ENCODE measurements at regions of chr1 and their contacts with region 1.

Region 1: GRCh38 chr1:163321311-163322305 is at the start of gene NUF2:
- DNase-seq: peak; percentile 85 to 97 (median 96)
- ATAC-seq: peak; percentile 99
- H3K4me3 ChIP-seq: peak within 1 kb of the TSS; percentile 69
- H3K4me3 Mint-ChIP-seq: peak within 1 kb of the TSS; percentile 92 to 96 (median 94)
- H3K27ac ChIP-seq: peak within 1 kb of the TSS; percentile 68
- H3K27ac Mint-ChIP-seq: peak within 1 kb of the TSS; percentile 92 to 98 (median 96)
- H3K4me1 ChIP-seq: peaks cover 12 to 15% of the 10 kb centered on the region in 2 donors
- H3K4me1 Mint-ChIP-seq: peaks cover 12 to 45% (median 24%) of the 10 kb centered on the region in 7 donors
- H3K27me3 ChIP-seq: no peaks in the 10 kb centered on the region
- H3K27me3 Mint-ChIP-seq: no peaks in the 10 kb centered on the region
- total RNA-seq, gene NUF2: 1.0 to 38.8 (median 2.1) TPM

Region 2: DNA sequence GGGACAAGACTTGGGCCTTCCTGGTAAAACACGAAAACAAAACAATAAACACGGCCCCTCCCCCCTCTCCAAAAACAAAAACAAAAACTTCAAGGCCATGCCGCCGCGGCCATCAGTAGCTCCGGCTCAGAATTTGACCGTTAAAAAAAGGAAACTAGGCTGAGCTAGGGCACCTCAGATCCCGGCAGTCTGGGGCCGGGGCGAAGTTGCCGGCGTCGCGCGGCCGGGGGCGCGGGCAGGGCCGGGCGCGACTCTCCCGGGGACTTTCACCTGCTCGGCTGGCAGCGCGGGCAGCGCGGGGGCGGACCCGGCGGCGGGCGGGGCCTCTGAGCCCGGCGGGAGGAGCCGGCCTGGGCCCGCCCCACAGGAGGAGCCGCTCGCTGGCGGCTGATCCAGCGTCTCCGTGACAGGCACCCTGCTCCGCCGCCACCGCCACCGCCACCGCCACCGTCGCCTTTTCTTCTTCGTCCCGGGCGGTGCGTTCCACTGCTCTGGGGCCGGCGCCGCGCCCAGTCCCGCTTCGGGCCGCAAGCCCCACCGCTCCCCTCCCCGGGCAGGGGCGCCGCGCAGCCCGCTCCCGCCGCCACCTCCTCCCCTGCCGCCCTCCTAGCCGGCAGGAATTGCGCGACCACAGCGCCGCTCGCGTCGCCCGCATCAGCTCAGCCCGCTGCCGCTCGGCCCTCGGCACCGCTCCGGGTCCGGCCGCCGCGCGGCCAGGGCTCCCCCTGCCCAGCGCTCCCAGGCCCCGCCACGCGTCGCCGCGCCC is 1252.1 kb before region 1 on chr1 and contains the start of gene NOS1AP:
- CTCF ChIA-PET with region 1: no interaction called
- POLR2A ChIA-PET with region 1: no interaction called
- intact Hi-C with region 1: loop called in 1 of 2 experiments (anchors 2 kb)
- DNase-seq: peak; percentile 50 to 87 (median 71)
- ATAC-seq: peak; percentile 99
- H3K4me3 ChIP-seq: peak within 1 kb of the TSS; percentile 56
- H3K4me3 Mint-ChIP-seq: peak within 1 kb of the TSS; percentile 79 to 90 (median 84)
- H3K27ac ChIP-seq: no peak within 1 kb of the TSS
- H3K27ac Mint-ChIP-seq: peak within 1 kb of the TSS in 1 of 9 donors; percentile 31
- H3K4me1 ChIP-seq: peaks cover 0 to 5% of the 10 kb centered on the region in 2 donors
- H3K4me1 Mint-ChIP-seq: peaks cover 0 to 12% (median 5%) of the 10 kb centered on the region in 7 donors
- H3K27me3 ChIP-seq: peaks cover 0 to 3% of the 10 kb centered on the region in 2 donors
- H3K27me3 Mint-ChIP-seq: peaks cover 51 to 79% (median 68%) of the 10 kb centered on the region in 5 donors
- total RNA-seq, gene NOS1AP: 0.08 to 0.15 TPM in 2 of 5 experiments, not detected in the others

Region 3: GRCh38 chr1:162497723-162498500 is 823.7 kb before region 1 on chr1 and contains the start of gene UHMK1:
- CTCF ChIA-PET with region 1: no interaction called
- POLR2A ChIA-PET with region 1: no interaction called
- intact Hi-C with region 1: loop called (anchors 1 to 5 kb)
- DNase-seq: peak; percentile 66 to 93 (median 90)
- ATAC-seq: peak; percentile 99
- H3K4me3 ChIP-seq: peak within 1 kb of the TSS; percentile 81
- H3K4me3 Mint-ChIP-seq: peak within 1 kb of the TSS; percentile 83 to 99 (median 92)
- H3K27ac ChIP-seq: peak within 1 kb of the TSS; percentile 90
- H3K27ac Mint-ChIP-seq: peak within 1 kb of the TSS; percentile 88 to 98 (median 94)
- H3K4me1 ChIP-seq: peaks cover 17 to 19% of the 10 kb centered on the region in 2 donors
- H3K4me1 Mint-ChIP-seq: peaks cover 22 to 55% (median 45%) of the 10 kb centered on the region in 7 donors
- H3K27me3 ChIP-seq: no peaks in the 10 kb centered on the region
- H3K27me3 Mint-ChIP-seq: peaks cover 0 to 5% (median 0%) of the 10 kb centered on the region in 5 donors
- total RNA-seq, gene UHMK1: 47.1 to 69.9 (median 66.6) TPM

Region 4: GRCh38 chr1:162561037-162561616 is 760.5 kb before region 1 on chr1:
- CTCF ChIA-PET with region 1: no interaction called
- POLR2A ChIA-PET with region 1: no interaction called
- intact Hi-C with region 1: loop called (anchors 1 to 2 kb)
- DNase-seq: peak; percentile 97 to 99 (median 97)
- ATAC-seq: peak; percentile 97
- H3K4me3 ChIP-seq: peak overlapping the region; percentile 91
- H3K4me3 Mint-ChIP-seq: peak overlapping the region; percentile 89 to 98 (median 96)
- H3K27ac ChIP-seq: peak overlapping the region; percentile 91
- H3K27ac Mint-ChIP-seq: peak overlapping the region; percentile 95 to 99 (median 97)
- H3K4me1 ChIP-seq: peaks cover 10% of the 10 kb centered on the region in 2 donors
- H3K4me1 Mint-ChIP-seq: peaks cover 16 to 51% (median 44%) of the 10 kb centered on the region in 7 donors
- H3K27me3 ChIP-seq: no peaks in the 10 kb centered on the region
- H3K27me3 Mint-ChIP-seq: no peaks in the 10 kb centered on the region

Region 5: DNA sequence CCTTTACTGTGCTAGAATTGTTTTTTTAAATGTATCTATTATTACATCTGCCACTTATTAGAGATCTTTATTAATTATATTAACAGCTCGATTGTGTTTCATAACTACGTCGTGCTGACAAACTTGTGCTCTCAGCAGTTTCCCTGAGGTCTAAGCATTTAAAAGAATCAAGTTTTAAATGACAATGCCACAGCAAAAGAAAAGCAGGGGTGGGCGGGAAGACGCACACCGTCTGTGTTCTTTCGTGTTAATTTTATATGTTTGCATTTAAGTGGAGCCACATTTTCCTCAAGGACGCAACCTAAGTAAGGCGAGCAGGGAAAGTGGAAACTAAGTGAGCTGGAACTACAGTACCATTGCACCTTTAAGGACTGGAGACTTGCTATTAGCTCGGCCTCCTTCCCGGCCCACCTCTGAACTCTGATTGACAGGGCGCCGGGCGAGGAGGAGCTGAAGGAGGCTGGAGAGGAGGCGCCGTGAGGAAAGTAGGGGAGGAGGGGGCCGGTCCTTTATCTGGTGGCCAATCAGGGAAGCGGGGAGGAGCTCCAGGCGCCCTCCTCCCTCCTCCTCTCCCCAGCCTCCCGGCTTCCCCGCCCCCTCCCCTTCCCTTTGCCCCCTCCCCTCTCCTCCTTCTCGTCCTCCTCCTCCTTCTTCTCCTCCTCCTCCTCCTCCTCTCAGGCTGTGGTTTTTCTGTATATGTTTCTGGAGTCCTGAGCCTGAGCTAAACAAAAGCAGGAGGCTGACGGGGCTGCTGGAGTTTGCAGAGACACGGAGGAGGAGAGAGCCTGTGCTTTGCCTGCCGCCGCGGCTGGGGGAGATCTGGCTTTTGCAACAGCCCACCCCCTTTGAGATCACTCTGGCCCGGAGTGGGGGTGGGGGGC is 1237.1 kb after region 1 on chr1 and contains the start of gene PBX1:
- CTCF ChIA-PET with region 1: no interaction called
- POLR2A ChIA-PET with region 1: no interaction called
- intact Hi-C with region 1: loop called in 1 of 2 experiments (anchors 5 kb)
- DNase-seq: peak; percentile 29 to 75 (median 64)
- ATAC-seq: peak; percentile 98
- H3K4me3 ChIP-seq: peak within 1 kb of the TSS; percentile 42
- H3K4me3 Mint-ChIP-seq: peak within 1 kb of the TSS; percentile 67 to 90 (median 83)
- H3K27ac ChIP-seq: peak within 1 kb of the TSS; percentile 14
- H3K27ac Mint-ChIP-seq: peak within 1 kb of the TSS in 2 of 9 donors; percentile 42 to 51
- H3K4me1 ChIP-seq: no peaks in the 10 kb centered on the region
- H3K4me1 Mint-ChIP-seq: peaks cover 0 to 33% (median 24%) of the 10 kb centered on the region in 7 donors
- H3K27me3 ChIP-seq: no peaks in the 10 kb centered on the region
- H3K27me3 Mint-ChIP-seq: peaks cover 22 to 59% (median 37%) of the 10 kb centered on the region in 5 donors
- total RNA-seq, gene PBX1: 0.02 to 2.9 (median 2.1) TPM

Measured in naive thymus-derived CD4-positive, alpha-beta T cell (primary cell).